ENCODE measurements at regions of chr1 and their contacts with region 1.

Region 1: DNA sequence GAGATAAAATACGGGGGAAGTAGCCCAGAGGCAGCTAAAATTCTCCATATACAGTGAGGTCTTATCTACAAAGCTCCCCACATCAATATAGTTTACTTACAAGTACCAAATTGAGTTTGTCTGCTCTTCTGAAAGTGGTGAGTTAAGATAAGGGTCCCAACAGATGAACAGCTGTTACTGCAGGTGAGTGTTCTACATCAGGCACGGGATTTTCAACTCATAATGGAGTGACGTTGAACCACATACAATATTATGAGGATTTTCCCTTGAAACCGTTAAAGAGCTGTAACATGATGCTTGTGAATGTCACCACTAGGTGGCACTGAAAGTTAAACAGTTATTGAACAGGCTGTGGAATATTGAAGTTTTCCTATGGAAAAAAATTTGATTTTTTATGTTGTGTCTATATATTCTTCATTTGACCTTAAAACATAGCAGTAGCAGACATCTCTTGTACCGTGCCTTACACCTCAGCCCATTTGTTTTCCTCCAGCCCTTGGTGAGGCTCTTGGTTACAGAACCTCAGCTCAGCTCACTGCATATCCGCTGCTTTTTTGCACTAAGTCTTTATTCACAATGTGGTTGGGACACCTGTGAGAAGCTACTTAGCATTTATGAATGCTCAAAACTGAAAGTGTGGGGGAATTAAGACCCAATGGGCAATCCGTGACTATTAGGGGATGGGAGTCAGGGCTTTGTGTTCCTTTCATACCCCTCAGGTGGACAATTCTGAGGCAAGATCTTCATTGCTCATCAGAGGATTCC is 23.2 kb downstream of the CD1D start:
- DNase-seq: peak in 1 of 7 donors; percentile 51
- H3K4me3 ChIP-seq: no peak overlapping the region
- H3K27ac ChIP-seq: no peak overlapping the region
- H3K4me1 ChIP-seq: no peaks in the 10 kb centered on the region
- H3K27me3 ChIP-seq: no peaks in the 10 kb centered on the region
- CTCF ChIP-seq: peak; percentile 54 to 88 (median 74)
- POLR2A ChIP-seq: no peak

Region 2: GRCh38 chr1:158295791-158296190 is 91.9 kb after region 1 on chr1:
- intact Hi-C with region 1: no loop called
- DNase-seq: no peak
- H3K4me3 ChIP-seq: no peak overlapping the region
- H3K27ac ChIP-seq: no peak overlapping the region
- H3K4me1 ChIP-seq: no peaks in the 10 kb centered on the region
- H3K27me3 ChIP-seq: no peaks in the 10 kb centered on the region
- CTCF ChIP-seq: no peak
- POLR2A ChIP-seq: no peak

Region 3: GRCh38 chr1:159071970-159072582 is 868.2 kb after region 1 on chr1:
- intact Hi-C with region 1: loop called in 1 of 2 experiments (anchors 5 kb)
- DNase-seq: no peak
- H3K4me3 ChIP-seq: no peak overlapping the region
- H3K27ac ChIP-seq: no peak overlapping the region
- H3K4me1 ChIP-seq: peaks cover 0 to 17% of the 10 kb centered on the region in 2 donors
- H3K27me3 ChIP-seq: no peaks in the 10 kb centered on the region
- CTCF ChIP-seq: peak; percentile 43 to 80 (median 77)
- POLR2A ChIP-seq: no peak